B cell (primary cell): ENCODE measurements at regions of chr1 and their contacts with region 1.

Region 1: GRCh38 chr1:101238681-101239094 is 1.9 kb downstream of the S1PR1 start:
- DNase-seq: peak; percentile 83
- ATAC-seq: peak; percentile 13
- H3K4me3 ChIP-seq: peak overlapping the region; percentile 74 to 98 (median 86)
- H3K4me3 Mint-ChIP-seq: peak overlapping the region; percentile 97
- H3K27ac ChIP-seq: peak overlapping the region; percentile 58 to 84
- H3K27ac Mint-ChIP-seq: peak overlapping the region; percentile 92
- H3K4me1 ChIP-seq: peaks cover 51 to 59% of the 10 kb centered on the region in 2 donors
- H3K4me1 Mint-ChIP-seq: peaks cover 66% of the 10 kb centered on the region
- H3K27me3 ChIP-seq: no peaks in the 10 kb centered on the region
- H3K27me3 Mint-ChIP-seq: no peaks in the 10 kb centered on the region
- CTCF ChIP-seq: peak; percentile 95

Region 2: DNA sequence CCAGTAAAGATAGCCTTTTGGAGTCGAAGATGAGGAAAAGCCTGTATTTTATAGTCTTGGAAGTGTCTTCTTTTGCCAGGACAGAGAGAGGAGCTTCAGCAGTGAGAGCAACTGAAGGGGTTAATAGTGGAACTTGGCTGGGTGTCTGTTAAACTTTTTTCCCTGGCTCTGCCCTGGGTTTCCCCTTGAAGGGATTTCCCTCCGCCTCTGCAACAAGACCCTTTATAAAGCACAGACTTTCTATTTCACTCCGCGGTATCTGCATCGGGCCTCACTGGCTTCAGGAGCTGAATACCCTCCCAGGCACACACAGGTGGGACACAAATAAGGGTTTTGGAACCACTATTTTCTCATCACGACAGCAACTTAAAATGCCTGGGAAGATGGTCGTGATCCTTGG is 519.2 kb before region 1 on chr1 and contains the start of gene VCAM1:
- CTCF ChIA-PET with region 1: no interaction called
- POLR2A ChIA-PET with region 1: no interaction called
- intact Hi-C with region 1: no loop called
- DNase-seq: no peak
- ATAC-seq: no peak
- H3K4me3 ChIP-seq: no peak within 1 kb of the TSS
- H3K4me3 Mint-ChIP-seq: no peak within 1 kb of the TSS
- H3K27ac ChIP-seq: no peak within 1 kb of the TSS
- H3K27ac Mint-ChIP-seq: no peak within 1 kb of the TSS
- H3K4me1 ChIP-seq: no peaks in the 10 kb centered on the region
- H3K4me1 Mint-ChIP-seq: peaks cover 2% of the 10 kb centered on the region
- H3K27me3 ChIP-seq: no peaks in the 10 kb centered on the region
- H3K27me3 Mint-ChIP-seq: peaks cover 12% of the 10 kb centered on the region
- CTCF ChIP-seq: no peak
- total RNA-seq, gene VCAM1: not detected in 2 replicates

Region 3: DNA sequence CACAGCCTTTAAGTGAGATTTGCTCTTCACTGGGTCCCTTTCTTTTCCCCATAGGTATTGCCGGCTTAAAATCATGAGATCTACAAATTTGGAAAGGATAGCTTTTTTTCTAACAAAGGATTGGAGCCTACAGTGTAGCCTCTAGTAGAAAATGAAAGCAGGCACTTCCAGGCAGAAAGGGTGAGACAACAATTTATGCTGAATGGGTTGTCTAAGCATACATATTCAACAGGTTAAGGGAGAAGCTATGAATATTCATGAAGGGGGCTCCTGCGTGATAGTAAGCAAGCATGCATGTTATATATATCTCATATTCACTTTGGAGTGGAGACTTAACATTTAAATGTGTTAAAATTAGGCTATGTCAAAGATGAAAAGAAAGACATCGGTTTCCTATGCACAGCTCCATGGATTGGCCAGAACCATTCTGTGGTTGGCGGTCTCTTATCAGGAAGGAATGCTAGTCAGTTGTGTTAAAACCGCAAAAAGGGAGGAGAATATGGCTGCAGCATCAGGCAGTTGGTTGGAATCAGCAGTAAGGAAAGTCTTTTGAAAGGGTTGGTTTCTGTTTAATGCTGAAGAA is 453.1 kb before region 1 on chr1:
- CTCF ChIA-PET with region 1: no interaction called
- POLR2A ChIA-PET with region 1: no interaction called
- intact Hi-C with region 1: no loop called
- DNase-seq: no peak
- ATAC-seq: no peak
- H3K4me3 ChIP-seq: no peak overlapping the region
- H3K4me3 Mint-ChIP-seq: no peak overlapping the region
- H3K27ac ChIP-seq: no peak overlapping the region
- H3K27ac Mint-ChIP-seq: no peak overlapping the region
- H3K4me1 ChIP-seq: no peaks in the 10 kb centered on the region
- H3K4me1 Mint-ChIP-seq: no peaks in the 10 kb centered on the region
- H3K27me3 ChIP-seq: peaks cover 0 to 7% (median 0%) of the 10 kb centered on the region in 4 experiments
- H3K27me3 Mint-ChIP-seq: peaks cover 22% of the 10 kb centered on the region
- CTCF ChIP-seq: no peak

Region 4: DNA sequence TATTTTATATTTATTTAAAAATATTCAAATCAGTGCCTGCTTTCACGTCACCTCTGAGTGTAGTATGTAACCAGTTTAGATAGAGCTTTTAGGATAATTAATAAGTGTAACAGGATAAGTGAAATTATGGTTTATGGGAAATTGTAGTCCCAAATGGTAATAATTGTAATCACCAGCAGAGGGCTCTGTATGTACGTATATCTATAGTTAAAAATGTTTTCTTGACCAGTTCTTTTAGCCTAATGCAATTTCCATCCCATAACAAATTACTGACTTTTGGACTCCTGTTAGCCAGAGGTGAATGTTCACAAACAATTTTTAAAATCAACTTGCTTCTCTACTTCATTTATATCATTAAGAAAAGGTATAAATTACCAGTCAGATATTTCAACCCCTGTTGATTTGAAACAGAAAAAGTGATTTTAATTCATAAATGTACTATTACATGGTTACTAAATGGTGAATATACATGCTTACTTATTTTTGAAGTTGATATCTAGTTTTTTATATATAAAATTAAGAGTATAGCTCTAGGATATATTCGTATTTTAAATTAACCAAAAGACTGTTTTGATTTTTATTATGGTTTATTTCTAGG is 317.5 kb before region 1 on chr1:
- CTCF ChIA-PET with region 1: interaction called, 31 read pairs
- POLR2A ChIA-PET with region 1: interaction called, 3 read pairs
- intact Hi-C with region 1: loop called (anchors 1 kb)
- DNase-seq: peak; percentile 74
- ATAC-seq: peak; percentile 47
- H3K4me3 ChIP-seq: no peak overlapping the region
- H3K4me3 Mint-ChIP-seq: no peak overlapping the region
- H3K27ac ChIP-seq: no peak overlapping the region
- H3K27ac Mint-ChIP-seq: no peak overlapping the region
- H3K4me1 ChIP-seq: peaks cover 0 to 7% of the 10 kb centered on the region in 2 donors
- H3K4me1 Mint-ChIP-seq: peaks cover 17% of the 10 kb centered on the region
- H3K27me3 ChIP-seq: no peaks in the 10 kb centered on the region
- H3K27me3 Mint-ChIP-seq: no peaks in the 10 kb centered on the region
- CTCF ChIP-seq: peak; percentile 93

Region 5: DNA sequence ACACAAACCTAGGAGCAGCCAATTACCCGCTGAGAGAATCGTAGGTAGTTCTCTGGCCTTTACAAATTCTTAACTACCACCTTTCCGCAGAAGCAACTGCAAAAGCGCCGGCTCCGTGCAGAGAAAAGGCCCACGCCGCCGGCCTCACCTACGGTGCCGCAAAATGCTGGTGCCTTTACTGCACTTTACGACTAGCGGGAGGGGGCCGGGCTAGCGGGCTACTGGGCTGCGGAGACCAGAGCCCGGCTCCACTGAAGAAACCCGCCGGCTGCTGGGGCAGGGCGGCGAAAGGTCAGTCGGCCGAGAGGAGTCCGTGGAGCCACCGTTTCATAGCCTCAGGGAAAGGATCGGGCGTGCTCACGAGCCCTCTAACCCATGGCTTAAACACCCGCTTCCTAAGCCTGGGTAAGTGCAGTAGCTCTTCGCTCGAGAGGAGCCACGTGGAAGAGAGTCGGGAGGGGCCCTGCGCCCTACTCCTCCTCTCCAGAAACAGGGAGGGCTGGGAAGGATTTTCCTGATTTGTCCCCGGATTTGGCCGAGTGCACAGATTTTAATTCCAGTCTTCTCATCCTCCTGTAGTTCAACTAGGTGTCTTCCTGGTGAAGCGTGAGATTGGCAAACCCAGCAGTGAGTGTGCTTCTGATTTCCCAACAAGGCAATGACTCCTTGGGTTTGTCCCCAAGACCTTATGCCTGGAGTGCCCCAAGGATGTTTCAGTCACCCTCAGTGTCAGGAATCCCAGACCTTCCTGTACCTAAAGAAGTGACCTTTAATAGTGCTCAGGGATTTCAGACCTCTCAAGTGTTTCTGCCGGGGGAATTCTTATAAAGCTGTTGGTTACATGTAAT is 212.8 kb before region 1 on chr1 and contains the start of gene DPH5:
- CTCF ChIA-PET with region 1: interaction called, 24 read pairs
- POLR2A ChIA-PET with region 1: interaction called, 8 read pairs
- intact Hi-C with region 1: loop called (anchors 1 kb)
- DNase-seq: peak; percentile 90
- ATAC-seq: peak; percentile 96
- H3K4me3 ChIP-seq: peak within 1 kb of the TSS; percentile 81 to 97 (median 92)
- H3K4me3 Mint-ChIP-seq: peak within 1 kb of the TSS; percentile 98
- H3K27ac ChIP-seq: peak within 1 kb of the TSS; percentile 78 to 85
- H3K27ac Mint-ChIP-seq: peak within 1 kb of the TSS; percentile 97
- H3K4me1 ChIP-seq: peaks cover 45 to 47% of the 10 kb centered on the region in 2 donors
- H3K4me1 Mint-ChIP-seq: peaks cover 50% of the 10 kb centered on the region
- H3K27me3 ChIP-seq: no peaks in the 10 kb centered on the region
- H3K27me3 Mint-ChIP-seq: no peaks in the 10 kb centered on the region
- CTCF ChIP-seq: no peak
- total RNA-seq, gene DPH5: 39.4 and 42.5 TPM in 2 replicates

Region 6: DNA sequence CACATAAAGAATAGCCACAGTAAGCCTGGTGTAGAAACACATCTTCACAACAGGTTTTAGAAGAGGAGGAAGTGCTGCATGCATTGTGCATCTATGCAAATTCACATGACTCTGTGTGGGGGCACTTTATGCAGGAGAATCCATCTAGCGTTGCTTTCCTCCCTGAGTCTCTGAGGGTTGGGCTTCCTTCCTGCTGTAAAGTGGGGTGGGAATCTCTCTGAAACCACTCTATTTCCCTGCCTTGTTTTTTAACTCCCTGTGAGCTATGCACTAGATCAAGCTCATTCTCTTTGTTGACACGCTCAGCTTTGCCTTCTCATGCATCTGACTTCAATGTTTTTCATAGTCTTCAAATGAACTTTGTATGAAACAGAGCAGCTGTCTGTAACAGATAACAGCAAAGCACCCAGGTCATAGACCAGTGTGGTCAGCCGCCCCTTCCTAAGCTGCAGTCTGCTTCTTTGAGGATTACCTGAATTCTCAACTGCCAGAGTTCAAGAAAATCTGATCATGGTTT is 110.4 kb before region 1 on chr1:
- CTCF ChIA-PET with region 1: interaction called, 8 read pairs
- POLR2A ChIA-PET with region 1: interaction called, 48 read pairs
- intact Hi-C with region 1: loop called (anchors 1 kb)
- DNase-seq: peak; percentile 75
- ATAC-seq: peak; percentile 93
- H3K4me3 ChIP-seq: peak overlapping the region in 3 of 5 experiments; percentile 37 to 59 (median 40)
- H3K4me3 Mint-ChIP-seq: peak overlapping the region; percentile 57
- H3K27ac ChIP-seq: peak overlapping the region; percentile 59 to 74
- H3K27ac Mint-ChIP-seq: peak overlapping the region; percentile 83
- H3K4me1 ChIP-seq: peaks cover 30 to 49% of the 10 kb centered on the region in 2 donors
- H3K4me1 Mint-ChIP-seq: peaks cover 60% of the 10 kb centered on the region
- H3K27me3 ChIP-seq: no peaks in the 10 kb centered on the region
- H3K27me3 Mint-ChIP-seq: no peaks in the 10 kb centered on the region
- CTCF ChIP-seq: no peak

Region 7: DNA sequence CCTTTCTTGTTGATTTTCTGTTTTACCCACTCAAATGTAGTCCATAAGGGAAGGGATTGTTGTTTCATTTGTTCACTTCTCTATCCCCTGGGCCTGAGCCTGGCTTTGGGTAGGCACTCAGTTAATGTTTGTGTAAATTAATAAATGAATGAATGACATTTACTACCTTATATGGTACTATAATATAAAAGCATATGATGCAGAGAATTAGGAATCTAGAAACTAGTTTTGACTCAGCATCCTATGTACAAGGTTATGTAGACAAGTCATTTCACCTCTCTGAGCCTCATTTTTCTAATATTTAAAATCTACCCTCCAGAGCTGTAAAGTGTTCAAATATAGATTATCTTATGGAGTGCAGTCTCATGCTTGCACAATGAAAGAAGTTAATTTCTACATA is 70.8 kb before region 1 on chr1:
- CTCF ChIA-PET with region 1: no interaction called
- POLR2A ChIA-PET with region 1: interaction called, 10 read pairs
- intact Hi-C with region 1: no loop called
- DNase-seq: no peak
- ATAC-seq: no peak
- H3K4me3 ChIP-seq: no peak overlapping the region
- H3K4me3 Mint-ChIP-seq: no peak overlapping the region
- H3K27ac ChIP-seq: no peak overlapping the region
- H3K27ac Mint-ChIP-seq: no peak overlapping the region
- H3K4me1 ChIP-seq: no peaks in the 10 kb centered on the region
- H3K4me1 Mint-ChIP-seq: no peaks in the 10 kb centered on the region
- H3K27me3 ChIP-seq: no peaks in the 10 kb centered on the region
- H3K27me3 Mint-ChIP-seq: no peaks in the 10 kb centered on the region
- CTCF ChIP-seq: no peak

Region 8: GRCh38 chr1:101257500-101258325 is 19.0 kb after region 1 on chr1:
- CTCF ChIA-PET with region 1: interaction called, 164 read pairs
- POLR2A ChIA-PET with region 1: interaction called, 5 read pairs
- intact Hi-C with region 1: no loop called
- DNase-seq: peak; percentile 57
- ATAC-seq: peak; percentile 74
- H3K4me3 ChIP-seq: no peak overlapping the region
- H3K4me3 Mint-ChIP-seq: peak overlapping the region; percentile 32
- H3K27ac ChIP-seq: peak overlapping the region in 1 of 2 donors; percentile 20
- H3K27ac Mint-ChIP-seq: peak overlapping the region; percentile 59
- H3K4me1 ChIP-seq: peaks cover 27 to 32% of the 10 kb centered on the region in 2 donors
- H3K4me1 Mint-ChIP-seq: peaks cover 46% of the 10 kb centered on the region
- H3K27me3 ChIP-seq: no peaks in the 10 kb centered on the region
- H3K27me3 Mint-ChIP-seq: no peaks in the 10 kb centered on the region
- CTCF ChIP-seq: no peak